Sigmoid colon (tissue), 7 donors: ENCODE measurements at regions of chr1 and their contacts with region 1.

Region 1: GRCh38 chr1:35769759-35770446 is at the start of gene CLSPN:
- DNase-seq: peak; percentile 97
- H3K4me3 ChIP-seq: peak within 1 kb of the TSS; percentile 39 to 78 (median 69)
- H3K27ac ChIP-seq: peak within 1 kb of the TSS; percentile 68 to 83 (median 76)
- H3K4me1 ChIP-seq: peaks cover 0 to 16% (median 7%) of the 10 kb centered on the region in 4 donors
- H3K27me3 ChIP-seq: no peaks in the 10 kb centered on the region
- CTCF ChIP-seq: no peak
- EP300 ChIP-seq: no peak
- POLR2A ChIP-seq: no peak
- total RNA-seq, gene CLSPN: under 0.01 to 0.41 (median 0.16) TPM in 3 of 4 donors, not detected in the other

Region 2: DNA sequence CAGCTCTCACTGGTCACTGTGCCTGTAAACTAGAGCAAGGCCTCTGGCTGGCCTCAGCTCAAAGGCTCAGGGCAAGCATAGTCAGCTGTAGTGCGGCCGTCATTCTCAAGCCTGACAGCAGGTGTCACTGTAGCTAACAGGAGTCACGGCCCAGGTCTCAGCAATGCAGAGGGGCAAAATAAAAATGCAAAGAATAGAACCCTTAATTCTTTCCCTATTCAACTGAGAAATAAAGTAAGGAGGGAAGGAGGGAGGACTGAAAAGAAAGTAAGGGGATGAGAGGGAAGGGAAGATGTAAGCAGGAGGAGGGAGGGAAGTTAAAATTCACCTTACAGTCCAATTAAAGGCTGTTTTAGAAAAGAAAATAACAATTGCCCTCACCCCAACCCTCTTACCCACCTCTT is 318.8 kb before region 1 on chr1:
- intact Hi-C with region 1: loop called (anchors 2 kb)
- DNase-seq: peak; percentile 86
- H3K4me3 ChIP-seq: no peak overlapping the region
- H3K27ac ChIP-seq: peak overlapping the region; percentile 37 to 69 (median 56)
- H3K4me1 ChIP-seq: peaks cover 0 to 38% (median 28%) of the 10 kb centered on the region in 4 donors
- H3K27me3 ChIP-seq: no peaks in the 10 kb centered on the region
- CTCF ChIP-seq: peak; percentile 67 to 81 (median 75)
- EP300 ChIP-seq: no peak
- POLR2A ChIP-seq: no peak

Region 3: DNA sequence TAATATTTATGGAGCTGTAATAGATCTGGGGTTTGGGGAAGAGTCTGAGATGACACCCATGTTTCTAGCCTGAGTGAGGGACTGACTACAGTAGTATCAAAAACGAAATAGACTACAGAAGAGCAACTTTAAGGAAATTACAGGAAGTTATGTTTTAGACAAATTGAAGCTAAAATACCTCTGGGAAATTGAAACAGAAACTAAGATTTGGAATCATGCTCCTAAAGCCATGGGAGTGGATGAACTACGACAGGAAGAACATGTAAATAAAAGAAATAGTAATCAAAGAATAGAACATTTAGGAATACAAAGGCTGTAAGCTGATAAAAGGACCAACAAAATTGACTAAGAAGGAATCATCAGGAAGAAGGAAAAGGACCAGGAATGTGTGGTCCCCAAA is 281.6 kb before region 1 on chr1:
- intact Hi-C with region 1: no loop called
- DNase-seq: no peak
- H3K4me3 ChIP-seq: no peak overlapping the region
- H3K27ac ChIP-seq: no peak overlapping the region
- H3K4me1 ChIP-seq: peaks cover 0 to 7% (median 0%) of the 10 kb centered on the region in 4 donors
- H3K27me3 ChIP-seq: no peaks in the 10 kb centered on the region
- CTCF ChIP-seq: no peak
- EP300 ChIP-seq: no peak
- POLR2A ChIP-seq: no peak

Region 4: DNA sequence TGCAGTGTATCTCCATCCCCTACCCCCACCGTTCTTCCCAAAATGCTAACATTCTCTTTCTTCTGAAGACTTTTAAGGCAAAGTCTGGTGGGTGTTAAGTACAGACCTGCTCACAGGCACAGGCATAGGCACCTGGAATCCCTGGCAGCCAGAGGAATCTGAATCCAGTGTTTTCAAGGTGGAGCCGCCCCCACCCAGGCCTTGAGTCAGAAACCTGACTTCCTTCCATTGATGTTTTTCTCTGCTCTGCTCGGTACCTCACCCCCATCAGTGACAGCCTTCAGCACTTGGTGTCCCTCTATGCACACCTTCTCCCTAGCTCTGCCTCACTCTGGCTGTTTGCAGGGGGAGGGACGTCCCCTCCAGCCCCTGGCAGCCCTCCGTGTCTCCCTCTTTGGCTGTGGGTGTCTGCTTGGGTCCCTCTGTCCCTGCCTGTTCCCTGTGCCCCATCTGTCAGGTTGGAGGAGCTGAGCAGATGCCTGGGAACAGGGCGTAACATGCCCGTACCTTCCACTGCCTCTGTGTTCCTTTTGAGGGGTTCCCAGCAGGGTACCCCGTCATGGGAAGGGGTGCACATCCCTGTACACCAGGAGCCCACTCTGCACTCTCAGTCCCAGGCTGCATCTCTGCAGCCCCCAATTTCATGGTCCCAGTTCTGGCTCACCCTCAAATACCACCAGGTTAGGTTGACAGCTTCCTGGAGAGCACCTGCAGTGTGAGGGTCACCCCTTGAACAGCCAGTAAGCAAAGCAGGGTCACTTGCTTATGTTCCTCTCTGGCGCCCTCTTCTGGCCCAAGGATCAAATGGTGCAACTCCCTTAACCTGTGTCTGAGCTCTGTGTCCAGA is 205.6 kb before region 1 on chr1:
- intact Hi-C with region 1: loop called (anchors 5 kb)
- DNase-seq: peak; percentile 85
- H3K4me3 ChIP-seq: no peak overlapping the region
- H3K27ac ChIP-seq: no peak overlapping the region
- H3K4me1 ChIP-seq: peaks cover 0 to 23% (median 20%) of the 10 kb centered on the region in 4 donors
- H3K27me3 ChIP-seq: no peaks in the 10 kb centered on the region
- CTCF ChIP-seq: peak; percentile 42 to 73 (median 59)
- EP300 ChIP-seq: no peak
- POLR2A ChIP-seq: no peak

Region 5: GRCh38 chr1:35641233-35641866 is 128.6 kb before region 1 on chr1 and contains the start of gene PSMB2:
- intact Hi-C with region 1: loop called (anchors 5 kb)
- DNase-seq: peak; percentile 98
- H3K4me3 ChIP-seq: peak within 1 kb of the TSS; percentile 65 to 87 (median 74)
- H3K27ac ChIP-seq: peak within 1 kb of the TSS; percentile 88 to 95 (median 90)
- H3K4me1 ChIP-seq: peaks cover 0 to 49% (median 44%) of the 10 kb centered on the region in 4 donors
- H3K27me3 ChIP-seq: peaks cover 0 to 5% (median 0%) of the 10 kb centered on the region in 3 donors
- CTCF ChIP-seq: no peak
- EP300 ChIP-seq: peak in 1 of 4 donors; percentile 58
- POLR2A ChIP-seq: peak; percentile 66 to 71
- total RNA-seq, gene PSMB2: 29.3 to 34.2 (median 31.0) TPM

Region 6: GRCh38 chr1:35726450-35727433 is 43.2 kb before region 1 on chr1:
- intact Hi-C with region 1: loop called (anchors 5 kb)
- DNase-seq: no peak
- H3K4me3 ChIP-seq: no peak overlapping the region
- H3K27ac ChIP-seq: no peak overlapping the region
- H3K4me1 ChIP-seq: peaks cover 0 to 8% (median 0%) of the 10 kb centered on the region in 4 donors
- H3K27me3 ChIP-seq: no peaks in the 10 kb centered on the region
- CTCF ChIP-seq: peak; percentile 43 to 89 (median 62)
- EP300 ChIP-seq: no peak
- POLR2A ChIP-seq: no peak

Region 7: GRCh38 chr1:35737120-35737519 is 32.8 kb before region 1 on chr1:
- intact Hi-C with region 1: no loop called
- DNase-seq: no peak
- H3K4me3 ChIP-seq: no peak overlapping the region
- H3K27ac ChIP-seq: no peak overlapping the region
- H3K4me1 ChIP-seq: no peaks in the 10 kb centered on the region
- H3K27me3 ChIP-seq: no peaks in the 10 kb centered on the region
- CTCF ChIP-seq: no peak
- EP300 ChIP-seq: no peak
- POLR2A ChIP-seq: no peak

Region 8: GRCh38 chr1:35807614-35808449 is 37.9 kb after region 1 on chr1 and contains the start of gene AGO4:
- intact Hi-C with region 1: no loop called
- DNase-seq: peak; percentile 74
- H3K4me3 ChIP-seq: peak within 1 kb of the TSS; percentile 62 to 88 (median 77)
- H3K27ac ChIP-seq: peak within 1 kb of the TSS; percentile 80 to 95 (median 88)
- H3K4me1 ChIP-seq: peaks cover 0 to 31% (median 22%) of the 10 kb centered on the region in 4 donors
- H3K27me3 ChIP-seq: no peaks in the 10 kb centered on the region
- CTCF ChIP-seq: no peak
- EP300 ChIP-seq: no peak
- POLR2A ChIP-seq: no peak
- total RNA-seq, gene AGO4: 16.8 to 29.9 (median 20.6) TPM